ENCODE measurements at regions of chr7 and their contacts with region 1.

Region 1: DNA sequence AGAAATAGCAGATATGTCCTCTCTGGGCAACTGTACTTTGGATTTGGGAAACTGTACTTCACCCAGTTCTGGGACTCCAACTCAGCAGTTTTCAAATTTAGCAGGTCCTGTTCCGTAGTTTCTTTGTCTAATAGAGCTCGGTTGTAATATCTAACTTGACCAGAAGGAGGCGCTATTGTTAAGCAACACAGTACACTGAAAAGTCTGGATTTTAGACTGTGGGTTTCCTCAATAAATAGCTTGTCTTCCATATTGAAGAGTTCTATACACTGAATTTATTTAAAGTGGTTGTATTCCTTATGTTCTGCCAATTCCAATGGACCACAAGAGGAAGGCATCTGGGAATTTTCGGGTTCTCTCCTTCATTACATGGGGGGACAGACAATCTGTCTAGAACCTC is 39.8 kb downstream of the ELFN1 start:
- DNase-seq: no peak
- H3K4me3 ChIP-seq: no peak overlapping the region
- H3K27ac ChIP-seq: no peak overlapping the region
- H3K4me1 ChIP-seq: no peaks in the 10 kb centered on the region
- H3K27me3 ChIP-seq: no peaks in the 10 kb centered on the region
- CTCF ChIP-seq: peak; percentile 22 to 42

Region 2: GRCh38 chr7:1532483-1533424 is 177.1 kb before region 1 on chr7:
- CTCF ChIA-PET with region 1: no interaction called
- dilution Hi-C with region 1: no loop called
- in situ Hi-C with region 1: no loop called
- intact Hi-C with region 1: no loop called
- DNase-seq: peak; percentile 24
- H3K4me3 ChIP-seq: no peak overlapping the region
- H3K27ac ChIP-seq: no peak overlapping the region
- H3K4me1 ChIP-seq: peaks cover 37% of the 10 kb centered on the region
- H3K27me3 ChIP-seq: no peaks in the 10 kb centered on the region
- CTCF ChIP-seq: no peak

Region 3: DNA sequence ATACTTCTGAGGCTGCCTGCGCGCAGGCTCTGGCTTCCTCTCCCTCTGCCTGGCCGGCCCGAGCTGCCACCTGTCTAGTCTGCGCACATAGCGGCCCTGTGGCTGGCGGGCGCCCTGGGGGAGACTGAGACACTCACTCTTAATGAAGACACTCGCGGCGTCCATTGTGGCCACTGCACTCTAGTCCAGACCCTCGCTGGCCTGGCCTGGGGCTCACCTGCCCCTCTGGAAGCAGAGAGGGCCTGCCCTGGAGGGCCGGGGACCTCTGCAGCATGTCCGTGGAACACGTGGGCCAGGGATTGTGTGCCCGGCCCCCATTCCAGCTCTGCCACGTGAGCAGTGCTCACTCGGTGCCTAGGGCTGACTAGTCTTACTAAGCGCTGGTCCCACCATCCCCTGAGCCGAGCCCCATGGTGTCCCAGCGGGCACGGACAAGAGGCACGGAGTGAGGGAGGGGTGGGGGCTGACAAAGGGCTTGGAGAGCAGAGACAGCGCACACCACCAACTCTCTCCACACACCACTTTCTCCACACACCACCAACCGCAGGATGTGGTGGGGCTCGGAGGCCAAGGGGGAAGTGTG is 109.5 kb after region 1 on chr7:
- CTCF ChIA-PET with region 1: no interaction called
- dilution Hi-C with region 1: no loop called
- in situ Hi-C with region 1: no loop called
- intact Hi-C with region 1: no loop called
- DNase-seq: no peak
- H3K4me3 ChIP-seq: no peak overlapping the region
- H3K27ac ChIP-seq: no peak overlapping the region
- H3K4me1 ChIP-seq: no peaks in the 10 kb centered on the region
- H3K27me3 ChIP-seq: no peaks in the 10 kb centered on the region
- CTCF ChIP-seq: no peak

Region 4: DNA sequence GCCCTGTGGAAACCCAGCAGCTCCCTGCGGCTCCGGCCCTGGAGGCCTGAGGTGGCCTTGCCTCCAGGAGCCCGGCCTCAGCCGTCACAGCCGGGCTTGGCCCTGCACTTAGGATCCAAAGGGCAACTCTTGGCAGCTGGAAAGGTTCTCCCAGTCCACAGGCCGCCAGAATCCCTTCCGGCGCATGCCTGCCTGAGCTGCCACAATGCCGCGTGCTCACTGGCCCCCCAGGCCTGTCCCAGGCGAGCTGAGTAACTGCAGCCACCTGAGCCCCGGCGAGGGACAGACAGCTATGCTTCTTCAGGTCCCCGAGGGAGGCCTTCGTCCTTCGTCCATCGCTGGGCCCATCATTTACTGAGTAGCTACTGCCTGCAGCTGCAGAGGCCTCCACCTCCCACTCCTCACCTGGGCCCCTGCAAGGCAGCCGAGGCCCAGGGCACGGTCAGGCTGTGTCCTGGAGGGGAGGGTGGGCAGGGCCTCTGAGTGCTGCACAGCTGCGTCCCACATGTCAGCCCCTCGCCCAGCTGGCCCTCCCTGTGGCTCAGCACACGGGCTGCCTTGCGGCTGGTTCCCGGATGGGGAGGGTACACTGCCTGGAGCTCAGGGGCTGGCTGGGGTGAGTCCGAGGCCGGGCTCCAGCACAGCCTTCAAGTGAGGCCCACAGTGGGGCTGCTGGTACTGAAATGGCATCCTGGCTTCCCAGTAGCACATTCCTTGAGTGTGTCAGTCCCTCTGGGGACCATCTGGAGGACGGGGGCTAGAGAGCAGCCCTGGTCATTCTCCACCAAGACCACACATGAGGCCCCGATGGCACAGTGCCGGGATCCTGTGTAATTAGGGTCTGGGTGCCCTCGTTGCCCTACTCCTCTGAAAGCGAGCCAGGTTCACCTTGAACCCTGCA is 132.7 kb after region 1 on chr7:
- CTCF ChIA-PET with region 1: no interaction called
- dilution Hi-C with region 1: no loop called
- in situ Hi-C with region 1: no loop called
- intact Hi-C with region 1: no loop called
- DNase-seq: no peak
- H3K4me3 ChIP-seq: no peak overlapping the region
- H3K27ac ChIP-seq: no peak overlapping the region
- H3K4me1 ChIP-seq: no peaks in the 10 kb centered on the region
- H3K27me3 ChIP-seq: no peaks in the 10 kb centered on the region
- CTCF ChIP-seq: no peak

Region 5: DNA sequence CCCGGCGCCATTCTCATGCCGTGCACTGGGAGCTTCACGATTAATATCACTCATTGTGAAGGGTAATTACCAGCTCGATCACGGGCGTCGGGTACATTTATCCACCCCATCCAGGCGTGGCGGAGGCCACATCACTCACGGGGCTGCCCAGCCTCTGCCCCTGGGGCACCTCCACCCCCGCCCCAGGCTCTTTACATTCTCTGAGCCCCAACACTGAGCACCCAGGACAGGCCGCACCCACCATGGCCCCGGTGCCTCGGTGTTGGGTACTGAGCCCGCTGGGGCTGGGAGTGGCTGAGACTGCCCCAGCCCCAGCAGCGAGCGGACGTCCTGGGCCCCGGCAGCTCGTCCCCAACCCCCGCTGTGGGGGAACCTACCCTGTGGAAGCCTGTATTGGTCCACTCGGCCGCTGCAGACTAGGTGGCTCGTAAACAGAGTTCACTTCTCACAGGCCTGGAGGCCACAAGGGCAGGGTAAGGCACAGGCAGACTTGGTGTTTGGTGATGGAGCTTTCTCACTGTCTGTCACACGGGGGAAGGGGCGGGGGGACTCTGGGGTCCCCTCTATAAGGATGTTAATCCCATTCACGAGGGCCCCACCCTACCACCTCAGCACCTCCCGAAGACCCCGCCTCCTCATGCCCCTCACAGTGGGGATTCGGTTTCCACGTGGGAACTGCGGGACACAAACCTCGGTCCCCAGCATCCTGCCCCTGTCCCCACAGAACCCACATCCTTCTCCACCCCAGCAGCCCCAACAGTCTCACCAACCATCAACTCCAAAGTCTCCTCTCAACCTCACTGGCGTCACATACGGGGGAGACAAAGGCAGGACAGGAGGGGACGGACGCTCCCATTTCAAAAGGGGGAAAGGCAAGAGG is 144.3 kb after region 1 on chr7:
- CTCF ChIA-PET with region 1: no interaction called
- dilution Hi-C with region 1: loop called (anchors 5 kb)
- in situ Hi-C with region 1: no loop called
- intact Hi-C with region 1: no loop called
- DNase-seq: no peak
- H3K4me3 ChIP-seq: no peak overlapping the region
- H3K27ac ChIP-seq: no peak overlapping the region
- H3K4me1 ChIP-seq: no peaks in the 10 kb centered on the region
- H3K27me3 ChIP-seq: no peaks in the 10 kb centered on the region
- CTCF ChIP-seq: no peak

Region 6: DNA sequence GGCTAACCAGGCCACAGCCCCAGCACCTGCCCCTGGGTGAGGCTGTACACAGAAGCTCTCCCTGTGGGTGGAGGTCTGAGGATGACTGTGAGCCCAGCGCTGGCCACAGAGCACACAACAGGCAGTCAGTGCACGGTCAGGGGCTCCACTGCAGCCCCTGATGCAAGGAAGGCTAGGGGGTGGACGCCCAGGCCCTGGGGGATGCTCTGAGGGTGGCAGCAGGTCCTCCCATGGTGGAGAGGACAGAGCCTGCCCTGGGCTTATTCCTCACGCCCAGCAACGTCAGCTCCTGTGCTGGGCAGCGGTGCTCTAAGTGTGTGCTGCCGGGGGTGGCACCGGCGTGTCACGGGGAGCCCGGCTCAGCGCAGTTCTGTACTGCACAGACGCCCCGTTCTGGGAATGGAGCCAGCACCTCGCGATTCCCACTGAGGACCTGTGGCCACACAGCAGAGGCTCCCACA is 299.7 kb after region 1 on chr7:
- CTCF ChIA-PET with region 1: no interaction called
- dilution Hi-C with region 1: loop called (anchors 10 kb)
- in situ Hi-C with region 1: no loop called
- intact Hi-C with region 1: no loop called
- DNase-seq: no peak
- H3K4me3 ChIP-seq: no peak overlapping the region
- H3K27ac ChIP-seq: no peak overlapping the region
- H3K4me1 ChIP-seq: peaks cover under 1% of the 10 kb centered on the region
- H3K27me3 ChIP-seq: no peaks in the 10 kb centered on the region
- CTCF ChIP-seq: no peak

Measured in mammary epithelial cell (primary cell).